K562 (cell line): ENCODE measurements at regions of chr3 and their contacts with region 1.

Region 1: GRCh38 chr3:113287803-113288648 is 76.7 kb downstream of the BOC start:
- DNase-seq: peak; percentile 47 to 63 (median 55)
- ATAC-seq: peak; percentile 80
- H3K4me3 ChIP-seq: no peak overlapping the region
- H3K27ac ChIP-seq: no peak overlapping the region
- H3K4me1 ChIP-seq: peaks cover 0 to 9% of the 10 kb centered on the region in 2 experiments; a peak in 3 of 5 replicates
- H3K27me3 ChIP-seq: peaks cover 0 to 21% of the 10 kb centered on the region in 2 experiments; a peak in 2 of 5 replicates
- CTCF ChIP-seq: peak; percentile 78 to 90 (median 86)
- EP300 ChIP-seq: no peak
- POLR2A ChIP-seq: no peak
- RAD21 ChIP-seq: peak; percentile 80 to 82

Region 2: GRCh38 chr3:112582244-112582874 is 705.7 kb before region 1 on chr3:
- CTCF ChIA-PET with region 1: interaction called, 8 read pairs
- POLR2A ChIA-PET with region 1: no interaction called
- in situ Hi-C with region 1: loop called (anchors 25 kb)
- intact Hi-C with region 1: no loop called
- DNase-seq: peak in 3 of 4 experiments; percentile 11 to 49 (median 16)
- ATAC-seq: peak; percentile 53; the same call in 2 of the 3 replicates
- H3K4me3 ChIP-seq: no peak overlapping the region
- H3K27ac ChIP-seq: no peak overlapping the region
- H3K4me1 ChIP-seq: no peaks in the 10 kb centered on the region
- H3K27me3 ChIP-seq: no peaks in the 10 kb centered on the region
- CTCF ChIP-seq: peak; percentile 30 to 72 (median 40); a peak in 5 of 6 replicates
- EP300 ChIP-seq: no peak
- POLR2A ChIP-seq: no peak
- RAD21 ChIP-seq: peak; percentile 67 to 76

Region 3: DNA sequence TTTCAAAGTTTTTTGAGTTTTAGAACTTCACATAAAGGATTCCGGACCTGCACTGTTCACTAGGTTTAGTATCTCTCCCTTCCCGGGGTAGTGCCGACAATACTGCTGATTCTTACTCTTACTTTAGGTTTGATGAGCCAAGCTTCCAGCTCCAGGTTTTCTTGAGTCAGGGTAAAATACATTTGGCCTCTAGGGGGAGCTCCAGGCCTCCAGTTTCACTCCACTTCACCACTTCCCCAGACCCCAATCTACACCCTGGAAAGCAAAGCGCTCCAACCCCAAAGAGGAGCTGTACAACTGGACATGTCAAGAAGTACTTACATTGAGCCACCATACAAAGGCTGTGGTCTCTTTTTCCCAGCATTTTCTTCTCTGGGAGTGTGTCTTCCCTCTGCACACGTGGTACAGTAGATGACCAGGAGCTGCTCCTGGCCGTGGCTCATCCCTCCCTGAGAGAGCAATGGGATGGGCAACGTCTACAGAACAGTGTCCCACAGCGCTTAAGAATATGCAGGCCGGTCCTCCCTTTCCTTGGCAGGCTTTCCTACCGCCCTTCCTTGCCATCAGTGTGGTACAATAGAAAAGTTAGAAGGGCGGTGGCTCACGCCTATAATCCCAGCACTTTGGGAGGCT is 553.2 kb before region 1 on chr3:
- CTCF ChIA-PET with region 1: no interaction called
- POLR2A ChIA-PET with region 1: no interaction called
- in situ Hi-C with region 1: loop called (anchors 25 kb)
- intact Hi-C with region 1: no loop called
- DNase-seq: peak; percentile 37 to 73 (median 49)
- ATAC-seq: peak; percentile 93
- H3K4me3 ChIP-seq: no peak overlapping the region
- H3K27ac ChIP-seq: no peak overlapping the region
- H3K4me1 ChIP-seq: peaks cover 0 to 4% of the 10 kb centered on the region in 2 experiments; a peak in 1 of 5 replicates
- H3K27me3 ChIP-seq: no peaks in the 10 kb centered on the region
- CTCF ChIP-seq: peak; percentile 53 to 75 (median 65)
- EP300 ChIP-seq: no peak
- POLR2A ChIP-seq: no peak
- RAD21 ChIP-seq: peak; percentile 72 to 79

Region 4: GRCh38 chr3:113043686-113044085 is 244.3 kb before region 1 on chr3:
- CTCF ChIA-PET with region 1: no interaction called
- POLR2A ChIA-PET with region 1: no interaction called
- in situ Hi-C with region 1: loop called (anchors 5 kb)
- intact Hi-C with region 1: no loop called
- DNase-seq: no peak
- ATAC-seq: no peak
- H3K4me3 ChIP-seq: no peak overlapping the region
- H3K27ac ChIP-seq: no peak overlapping the region
- H3K4me1 ChIP-seq: no peaks in the 10 kb centered on the region
- H3K27me3 ChIP-seq: no peaks in the 10 kb centered on the region; a peak in 1 of 5 replicates
- CTCF ChIP-seq: no peak
- EP300 ChIP-seq: no peak
- POLR2A ChIP-seq: no peak
- RAD21 ChIP-seq: no peak

Region 5: GRCh38 chr3:113051302-113051711 is 236.7 kb before region 1 on chr3:
- CTCF ChIA-PET with region 1: interaction called, 16 read pairs
- POLR2A ChIA-PET with region 1: no interaction called
- in situ Hi-C with region 1: no loop called
- intact Hi-C with region 1: loop called (anchors 1 kb)
- DNase-seq: peak; percentile 62 to 73 (median 65)
- ATAC-seq: peak; percentile 95
- H3K4me3 ChIP-seq: no peak overlapping the region
- H3K27ac ChIP-seq: no peak overlapping the region
- H3K4me1 ChIP-seq: no peaks in the 10 kb centered on the region; a peak in 2 of 5 replicates
- H3K27me3 ChIP-seq: no peaks in the 10 kb centered on the region; a peak in 1 of 5 replicates
- CTCF ChIP-seq: peak; percentile 66 to 79 (median 75)
- EP300 ChIP-seq: no peak
- POLR2A ChIP-seq: no peak
- RAD21 ChIP-seq: peak; percentile 78 to 88

Region 6: GRCh38 chr3:113136071-113136470 is 152.0 kb before region 1 on chr3:
- CTCF ChIA-PET with region 1: interaction called, 8 read pairs
- POLR2A ChIA-PET with region 1: interaction called, 3 read pairs
- in situ Hi-C with region 1: no loop called
- intact Hi-C with region 1: loop called (anchors 1 kb)
- DNase-seq: peak in 2 of 4 experiments; percentile 5
- ATAC-seq: no peak
- H3K4me3 ChIP-seq: no peak overlapping the region
- H3K27ac ChIP-seq: no peak overlapping the region
- H3K4me1 ChIP-seq: no peaks in the 10 kb centered on the region
- H3K27me3 ChIP-seq: no peaks in the 10 kb centered on the region; a peak in 1 of 5 replicates
- CTCF ChIP-seq: peak; percentile 19 to 34 (median 22); a peak in 3 of 6 replicates
- EP300 ChIP-seq: no peak
- POLR2A ChIP-seq: no peak
- RAD21 ChIP-seq: peak; percentile 42 to 56

Region 7: DNA sequence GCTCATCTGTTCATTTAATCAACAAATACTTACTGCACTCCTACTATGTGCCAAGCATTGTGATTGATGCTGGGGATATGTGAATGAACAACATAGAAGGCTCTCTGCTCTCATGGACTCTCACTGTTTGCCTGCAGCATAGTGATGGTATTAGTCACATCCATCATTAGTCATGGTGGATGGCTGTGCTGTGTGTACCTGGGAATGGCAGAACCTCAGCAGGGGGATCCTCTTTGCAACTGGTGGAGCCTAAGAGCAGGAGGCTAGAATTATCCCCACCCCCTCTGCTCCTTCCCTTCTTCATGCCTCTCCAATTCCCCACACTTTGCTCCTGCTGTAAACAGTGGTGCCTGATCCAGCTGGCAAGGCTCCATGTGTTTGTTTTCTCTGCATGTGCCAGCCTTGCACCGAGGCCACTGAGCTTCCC is 56.2 kb before region 1 on chr3:
- CTCF ChIA-PET with region 1: no interaction called
- POLR2A ChIA-PET with region 1: no interaction called
- in situ Hi-C with region 1: no loop called
- intact Hi-C with region 1: no loop called
- DNase-seq: no peak
- ATAC-seq: no peak
- H3K4me3 ChIP-seq: no peak overlapping the region
- H3K27ac ChIP-seq: no peak overlapping the region
- H3K4me1 ChIP-seq: no peaks in the 10 kb centered on the region
- H3K27me3 ChIP-seq: peaks cover 0 to 12% of the 10 kb centered on the region in 2 experiments; a peak in 2 of 5 replicates
- CTCF ChIP-seq: no peak
- EP300 ChIP-seq: no peak
- POLR2A ChIP-seq: no peak
- RAD21 ChIP-seq: no peak

Region 8: DNA sequence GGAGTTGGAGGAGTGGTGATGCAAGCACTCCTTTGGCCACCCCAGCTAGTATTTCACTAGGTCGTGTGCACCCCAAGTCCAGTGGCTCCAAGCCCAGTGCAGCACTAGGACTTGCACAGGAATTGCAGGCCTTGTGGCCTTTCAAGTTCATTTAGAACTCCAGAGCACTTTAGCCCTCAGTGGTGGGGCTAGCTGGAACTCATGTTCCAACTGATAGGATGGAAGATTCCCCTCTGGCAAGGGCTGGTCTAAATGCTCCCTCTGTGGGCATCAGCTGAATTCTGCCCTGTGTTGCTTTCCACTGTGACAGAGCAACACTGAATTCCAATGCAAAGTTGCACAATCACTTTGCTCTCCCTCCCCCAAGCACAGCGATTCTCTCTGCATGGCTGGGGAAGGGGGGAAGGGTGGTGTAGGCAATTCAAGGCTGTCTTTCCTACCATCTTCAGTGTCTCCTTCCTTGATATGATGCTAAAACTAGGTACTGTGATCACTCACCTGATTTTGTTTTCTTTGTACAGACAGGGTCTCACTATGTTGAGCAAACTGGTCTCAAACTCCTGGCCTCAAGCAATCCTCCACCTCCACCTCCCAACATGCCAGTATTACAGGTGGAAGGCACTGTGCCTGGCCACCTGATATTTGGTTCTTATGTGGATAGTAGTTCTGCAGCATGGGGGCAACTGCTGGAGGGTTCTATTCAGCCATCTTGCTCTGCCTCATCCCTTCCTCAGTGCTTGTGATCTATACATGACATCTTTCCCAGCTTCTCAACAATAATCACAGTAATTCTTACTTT is 398.1 kb after region 1 on chr3:
- CTCF ChIA-PET with region 1: no interaction called
- POLR2A ChIA-PET with region 1: no interaction called
- in situ Hi-C with region 1: no loop called
- intact Hi-C with region 1: no loop called
- DNase-seq: no peak
- ATAC-seq: no peak
- H3K4me3 ChIP-seq: no peak overlapping the region
- H3K27ac ChIP-seq: no peak overlapping the region
- H3K4me1 ChIP-seq: no peaks in the 10 kb centered on the region
- H3K27me3 ChIP-seq: no peaks in the 10 kb centered on the region
- CTCF ChIP-seq: no peak
- EP300 ChIP-seq: no peak
- POLR2A ChIP-seq: no peak
- RAD21 ChIP-seq: no peak